Activated T-helper 1 cell treated with anti-CD3 and anti-CD28 coated beads, Interleukin-12 subunit alpha, Interleukin-12 subunit beta, Interleukin-2, Interleukin-4 antibody, amounts not matched to agents 30 ng/mL and 10 ng/mL and 1 ng/mL, durations not matched to agents 14 hours and 24 hours and 36 hours (primary cell): ENCODE measurements at regions of chr11 and their contacts with region 1.

Region 1: GRCh38 chr11:12235947-12236743 is 125.8 kb downstream of the MICAL2 start:
- DNase-seq: peak; percentile 67
- H3K4me3 Mint-ChIP-seq: peak overlapping the region; percentile 77
- H3K27ac Mint-ChIP-seq: peak overlapping the region; percentile 96
- H3K4me1 Mint-ChIP-seq: peaks cover 65% of the 10 kb centered on the region
- H3K27me3 Mint-ChIP-seq: no peaks in the 10 kb centered on the region

Region 2: GRCh38 chr11:12087075-12088004 is 148.8 kb before region 1 on chr11:
- intact Hi-C with region 1: loop called (anchors 1 kb)
- DNase-seq: peak; percentile 60
- H3K4me3 Mint-ChIP-seq: peak overlapping the region; percentile 58
- H3K27ac Mint-ChIP-seq: peak overlapping the region; percentile 85
- H3K4me1 Mint-ChIP-seq: peaks cover 75% of the 10 kb centered on the region
- H3K27me3 Mint-ChIP-seq: peaks cover 1% of the 10 kb centered on the region

Region 3: GRCh38 chr11:12174477-12175143 is 61.5 kb before region 1 on chr11:
- intact Hi-C with region 1: loop called (anchors 1 kb)
- DNase-seq: no peak
- H3K4me3 Mint-ChIP-seq: peak overlapping the region; percentile 75
- H3K27ac Mint-ChIP-seq: peak overlapping the region; percentile 93
- H3K4me1 Mint-ChIP-seq: peaks cover 79% of the 10 kb centered on the region
- H3K27me3 Mint-ChIP-seq: peaks cover 2% of the 10 kb centered on the region

Region 4: GRCh38 chr11:12207384-12208150 is 28.6 kb before region 1 on chr11:
- intact Hi-C with region 1: loop called (anchors 1 kb)
- DNase-seq: no peak
- H3K4me3 Mint-ChIP-seq: peak overlapping the region; percentile 68
- H3K27ac Mint-ChIP-seq: peak overlapping the region; percentile 93
- H3K4me1 Mint-ChIP-seq: peaks cover 87% of the 10 kb centered on the region
- H3K27me3 Mint-ChIP-seq: no peaks in the 10 kb centered on the region

Region 5: GRCh38 chr11:12281571-12282478 is 45.7 kb after region 1 on chr11:
- intact Hi-C with region 1: loop called (anchors 1 kb)
- DNase-seq: peak; percentile 63
- H3K4me3 Mint-ChIP-seq: no peak overlapping the region
- H3K27ac Mint-ChIP-seq: peak overlapping the region; percentile 20
- H3K4me1 Mint-ChIP-seq: peaks cover 22% of the 10 kb centered on the region
- H3K27me3 Mint-ChIP-seq: no peaks in the 10 kb centered on the region